ENCODE measurements at regions of chr6 and their contacts with region 1.

Region 1: DNA sequence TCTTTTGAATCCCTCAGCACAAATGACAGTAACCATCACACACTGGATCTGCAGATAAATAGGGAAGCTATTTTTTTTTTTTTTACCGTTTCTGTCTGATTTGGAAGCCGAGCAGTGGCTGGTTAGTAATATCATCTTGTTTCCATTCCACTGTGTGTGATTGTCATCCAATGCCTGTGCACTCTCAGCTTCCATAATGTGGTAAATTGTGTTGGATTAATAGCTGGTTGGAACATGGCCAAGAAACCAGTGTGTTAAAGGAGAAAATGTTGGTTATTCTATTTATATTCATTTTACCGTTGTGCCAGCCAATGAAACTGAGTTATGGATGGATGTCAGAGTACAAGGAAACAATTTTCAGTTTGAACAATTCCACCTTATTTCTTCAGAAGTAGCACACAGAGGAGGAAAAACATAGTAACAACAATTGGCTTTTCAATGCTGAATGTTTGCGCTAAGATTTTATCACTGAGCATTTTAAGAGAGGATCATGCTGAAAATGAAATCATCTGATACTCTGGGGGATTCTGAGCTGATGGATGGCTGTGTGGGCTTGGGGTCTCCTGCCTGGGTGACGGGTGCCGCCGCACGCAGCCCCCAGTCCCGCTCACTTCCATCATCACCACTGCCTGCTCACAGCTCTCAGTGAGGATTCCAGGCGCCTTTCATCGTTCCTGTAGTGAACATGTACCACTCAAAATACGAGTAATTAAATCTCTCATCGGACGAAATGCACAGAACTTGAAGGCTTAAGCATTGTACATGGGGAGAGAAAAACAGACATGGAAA is 40.7 kb upstream of the EXOC2 start:
- DNase-seq: no peak
- H3K4me3 ChIP-seq: no peak overlapping the region
- H3K27ac ChIP-seq: no peak overlapping the region
- H3K4me1 ChIP-seq: no peaks in the 10 kb centered on the region
- H3K27me3 ChIP-seq: no peaks in the 10 kb centered on the region
- CTCF ChIP-seq: no peak
- EP300 ChIP-seq: no peak
- POLR2A ChIP-seq: no peak

Region 2: GRCh38 chr6:188821-189655 is 544.6 kb before region 1 on chr6:
- intact Hi-C with region 1: no loop called
- DNase-seq: peak; percentile 73 to 85 (median 78)
- H3K4me3 ChIP-seq: no peak overlapping the region
- H3K27ac ChIP-seq: no peak overlapping the region
- H3K4me1 ChIP-seq: no peaks in the 10 kb centered on the region
- H3K27me3 ChIP-seq: no peaks in the 10 kb centered on the region
- CTCF ChIP-seq: peak in 2 of 3 donors; percentile 48 to 51
- EP300 ChIP-seq: no peak
- POLR2A ChIP-seq: peak; percentile 10

Region 3: DNA sequence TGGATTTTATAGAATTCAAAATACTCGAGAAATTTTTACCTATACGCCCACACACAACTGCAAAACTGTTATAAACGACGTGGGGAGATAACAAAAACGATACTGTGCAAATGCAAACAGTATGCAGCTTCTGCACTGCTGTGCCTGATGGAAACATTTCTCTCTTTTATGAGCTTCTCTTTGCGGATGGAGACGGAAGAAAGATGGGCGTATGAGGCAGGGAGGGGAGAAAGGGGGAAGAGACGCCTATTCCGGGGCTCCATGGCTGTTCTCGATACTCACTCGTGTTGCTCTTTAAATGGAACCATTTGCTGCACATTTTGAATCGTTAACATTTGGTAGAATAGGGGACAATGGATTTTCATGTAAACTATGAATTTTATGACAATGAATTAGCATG is 28.4 kb after region 1 on chr6:
- intact Hi-C with region 1: loop called in 1 of 4 experiments (anchors 2 kb)
- DNase-seq: no peak
- H3K4me3 ChIP-seq: no peak overlapping the region
- H3K27ac ChIP-seq: no peak overlapping the region
- H3K4me1 ChIP-seq: no peaks in the 10 kb centered on the region
- H3K27me3 ChIP-seq: no peaks in the 10 kb centered on the region
- CTCF ChIP-seq: no peak
- EP300 ChIP-seq: no peak
- POLR2A ChIP-seq: no peak